ENCODE measurements at regions of chr4 and their contacts with region 1.

Region 1: GRCh38 chr4:147866532-147867271 is 134.8 kb downstream of the ARHGAP10 start:
- DNase-seq: peak; percentile 98
- H3K4me3 Mint-ChIP-seq: no peak overlapping the region
- H3K27ac Mint-ChIP-seq: no peak overlapping the region
- H3K4me1 Mint-ChIP-seq: no peaks in the 10 kb centered on the region
- H3K27me3 Mint-ChIP-seq: no peaks in the 10 kb centered on the region

Region 2: DNA sequence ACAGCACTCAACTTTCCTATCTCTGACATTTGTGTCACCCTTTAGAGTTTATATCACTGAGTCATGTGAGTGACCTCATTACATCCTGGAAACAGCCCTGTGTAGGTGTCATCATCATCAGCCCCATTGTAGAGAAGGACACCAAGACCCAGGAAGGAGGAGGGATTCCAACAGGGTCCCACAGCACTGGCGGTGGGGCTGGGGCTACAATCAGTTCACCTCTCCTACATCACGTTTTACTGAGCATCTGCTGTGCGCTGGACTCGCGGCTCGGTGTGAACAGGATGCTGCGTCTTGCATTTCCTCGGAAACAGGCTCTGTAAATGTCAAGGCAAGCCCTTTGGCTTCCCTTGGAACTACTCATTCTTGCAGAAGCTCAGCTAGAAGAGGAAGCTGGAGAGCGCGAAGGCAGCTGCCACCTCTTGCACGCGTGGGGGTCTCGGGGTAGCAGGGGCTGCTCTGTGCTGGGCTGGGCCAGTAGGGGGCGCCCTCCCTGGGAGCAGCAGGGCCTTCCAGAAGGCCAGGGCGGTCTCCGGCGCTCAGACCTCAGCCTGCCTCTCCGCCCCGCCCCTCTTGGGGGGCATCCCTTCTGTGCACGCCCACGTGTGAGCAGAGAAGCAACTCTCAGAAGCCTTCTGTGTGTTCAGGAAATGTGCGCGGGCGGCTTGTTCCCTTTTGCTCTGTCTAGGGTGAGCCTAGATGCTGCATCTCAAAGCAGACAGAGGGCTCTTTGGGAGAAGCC is 1623.4 kb before region 1 on chr4:
- CTCF ChIA-PET with region 1: no interaction called
- intact Hi-C with region 1: loop called (anchors 2 kb)
- DNase-seq: peak; percentile 71
- H3K4me3 Mint-ChIP-seq: peak overlapping the region; percentile 63
- H3K27ac Mint-ChIP-seq: peak overlapping the region; percentile 77
- H3K4me1 Mint-ChIP-seq: peaks cover 35% of the 10 kb centered on the region
- H3K27me3 Mint-ChIP-seq: peaks cover 3% of the 10 kb centered on the region

Region 3: GRCh38 chr4:147285751-147286150 is 581.0 kb before region 1 on chr4:
- CTCF ChIA-PET with region 1: no interaction called
- intact Hi-C with region 1: no loop called
- DNase-seq: no peak
- H3K4me3 Mint-ChIP-seq: no peak overlapping the region
- H3K27ac Mint-ChIP-seq: no peak overlapping the region
- H3K4me1 Mint-ChIP-seq: no peaks in the 10 kb centered on the region
- H3K27me3 Mint-ChIP-seq: no peaks in the 10 kb centered on the region

Region 4: GRCh38 chr4:147518846-147519767 is 347.6 kb before region 1 on chr4:
- CTCF ChIA-PET with region 1: interaction called, 23 read pairs
- intact Hi-C with region 1: loop called (anchors 1 kb)
- DNase-seq: peak; percentile 72
- H3K4me3 Mint-ChIP-seq: no peak overlapping the region
- H3K27ac Mint-ChIP-seq: no peak overlapping the region
- H3K4me1 Mint-ChIP-seq: no peaks in the 10 kb centered on the region
- H3K27me3 Mint-ChIP-seq: no peaks in the 10 kb centered on the region

Region 5: DNA sequence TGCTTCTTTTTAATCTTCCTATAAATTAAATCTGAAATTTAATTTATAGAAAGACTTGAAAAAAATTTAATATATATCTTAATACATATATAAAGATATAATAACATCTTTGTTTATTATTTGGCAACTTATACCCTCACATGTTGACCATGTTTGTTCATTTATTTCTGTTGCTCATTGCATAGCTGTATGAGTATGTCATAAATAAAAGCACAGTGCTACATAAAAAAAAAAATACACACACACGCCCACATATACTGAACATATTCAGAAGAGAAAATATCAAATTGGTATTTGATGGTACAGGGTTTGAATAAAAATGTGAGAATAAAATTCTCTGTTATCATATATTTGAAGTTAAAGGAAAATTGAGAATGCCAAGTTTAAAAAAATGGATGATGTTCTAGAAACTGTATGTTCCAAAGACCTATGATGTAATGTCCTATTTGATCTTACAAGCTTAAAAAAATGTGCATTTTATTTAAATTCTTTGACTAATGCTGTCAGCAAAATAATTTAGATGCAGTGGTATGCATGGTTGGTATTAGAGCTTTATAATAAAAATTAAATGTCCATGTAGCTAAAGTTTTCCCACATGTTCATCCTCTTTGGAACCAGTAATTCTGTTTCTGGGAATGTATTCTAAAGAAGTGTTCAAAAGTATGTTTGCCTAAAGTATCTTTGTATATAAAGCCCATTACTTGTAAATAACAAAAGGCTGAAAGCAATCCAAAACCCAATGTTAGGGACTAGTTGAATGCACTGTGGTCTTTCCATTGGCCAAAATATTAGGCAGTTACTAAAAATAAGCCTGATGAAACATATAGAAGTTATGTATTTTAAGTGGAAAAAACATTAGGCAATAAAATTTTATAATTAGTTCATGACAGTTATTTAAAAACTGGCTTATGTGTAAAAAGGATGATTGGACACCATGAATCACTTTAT is 236.6 kb before region 1 on chr4:
- CTCF ChIA-PET with region 1: interaction called, 11 read pairs
- intact Hi-C with region 1: no loop called
- DNase-seq: no peak
- H3K4me3 Mint-ChIP-seq: no peak overlapping the region
- H3K27ac Mint-ChIP-seq: no peak overlapping the region
- H3K4me1 Mint-ChIP-seq: peaks cover 2% of the 10 kb centered on the region
- H3K27me3 Mint-ChIP-seq: no peaks in the 10 kb centered on the region

Region 6: GRCh38 chr4:147731580-147732517 is 134.9 kb before region 1 on chr4 and contains the start of gene ARHGAP10:
- CTCF ChIA-PET with region 1: interaction called, 57 read pairs
- intact Hi-C with region 1: loop called (anchors 1 kb)
- DNase-seq: peak; percentile 72
- H3K4me3 Mint-ChIP-seq: peak within 1 kb of the TSS; percentile 85
- H3K27ac Mint-ChIP-seq: peak within 1 kb of the TSS; percentile 59
- H3K4me1 Mint-ChIP-seq: peaks cover 34% of the 10 kb centered on the region
- H3K27me3 Mint-ChIP-seq: peaks cover 8% of the 10 kb centered on the region
- total RNA-seq, gene ARHGAP10: 3.6 to 3.8 TPM

Region 7: DNA sequence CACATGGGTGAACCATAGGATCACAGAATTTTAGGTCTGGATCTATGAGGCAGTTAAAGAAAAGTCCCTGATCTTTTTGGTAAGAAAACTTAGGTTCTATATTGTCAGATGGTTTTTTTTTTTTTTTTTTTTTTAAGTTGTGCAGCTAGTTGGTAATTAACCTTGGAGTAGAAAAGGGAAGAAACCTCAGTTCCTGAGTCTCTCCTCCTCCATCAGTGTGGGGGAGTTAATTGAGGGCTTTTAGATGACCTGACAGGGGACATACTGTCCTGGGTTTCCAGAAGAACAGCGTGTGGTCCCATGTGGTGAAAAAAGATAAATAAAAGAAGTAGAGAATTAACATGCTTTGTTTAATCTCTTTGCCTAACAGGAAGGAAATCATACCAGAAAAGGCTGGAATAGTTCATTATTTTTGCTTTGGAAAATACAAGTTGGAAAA is 11.1 kb before region 1 on chr4:
- CTCF ChIA-PET with region 1: interaction called, 30 read pairs
- intact Hi-C with region 1: no loop called
- DNase-seq: no peak
- H3K4me3 Mint-ChIP-seq: no peak overlapping the region
- H3K27ac Mint-ChIP-seq: no peak overlapping the region
- H3K4me1 Mint-ChIP-seq: no peaks in the 10 kb centered on the region
- H3K27me3 Mint-ChIP-seq: no peaks in the 10 kb centered on the region

Measured in activated naive CD4-positive, alpha-beta T cell treated with anti-CD3 and anti-CD28 coated beads for 36 hours (primary cell).